Activated CD4-positive, alpha-beta T cell treated with anti-CD3 and anti-CD28 coated beads for 36 hours (primary cell): ENCODE measurements at regions of chr2 and their contacts with region 1.

Region 1: DNA sequence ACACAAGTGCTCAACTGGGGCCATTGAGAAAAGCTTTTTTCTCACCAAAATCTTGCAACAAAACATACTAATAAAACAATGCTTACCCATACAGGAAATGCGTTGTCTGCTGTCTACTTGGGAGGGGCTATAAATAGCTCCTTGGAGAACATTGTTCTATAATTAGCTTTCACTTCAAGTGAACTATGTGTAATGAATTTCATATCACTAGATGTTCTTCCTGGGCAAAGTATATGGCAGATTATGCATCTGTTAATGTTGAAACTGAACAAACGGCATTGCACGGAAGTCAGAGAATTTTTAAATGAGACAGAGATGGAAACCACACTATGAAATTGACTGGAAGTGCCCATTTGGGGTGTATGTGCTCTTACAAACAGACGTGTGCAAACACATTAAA is 6.4 kb upstream of the NPAS2 start:
- DNase-seq: no peak
- ATAC-seq: peak; percentile 86
- H3K4me3 Mint-ChIP-seq: no peak overlapping the region
- H3K27ac Mint-ChIP-seq: peak overlapping the region; percentile 76
- H3K4me1 Mint-ChIP-seq: peaks cover 34% of the 10 kb centered on the region
- H3K27me3 Mint-ChIP-seq: peaks cover 10% of the 10 kb centered on the region

Region 2: DNA sequence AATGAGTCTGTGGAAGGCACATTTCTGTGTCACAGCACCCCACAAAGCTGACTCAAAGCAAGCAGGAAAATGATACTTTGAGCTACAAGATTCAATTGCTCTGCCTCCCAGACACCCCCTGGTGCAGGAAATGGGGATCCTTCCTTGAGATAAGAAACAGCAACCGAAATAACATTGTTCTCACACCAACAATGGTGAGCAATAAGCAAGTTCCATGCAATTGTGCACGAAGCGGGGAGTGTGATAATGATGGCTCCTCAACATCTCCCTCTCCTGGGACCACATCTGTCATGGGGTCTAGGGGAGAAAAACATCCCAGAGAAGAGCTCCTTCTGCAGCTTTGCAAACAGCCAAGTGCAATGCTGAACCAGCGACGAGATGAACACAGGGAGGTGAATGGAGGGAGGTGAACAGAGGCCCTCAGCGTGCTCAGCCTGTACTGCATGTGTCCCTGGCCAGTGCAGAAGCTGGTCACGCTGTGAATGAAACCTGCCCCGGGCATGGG is 183.0 kb before region 1 on chr2:
- CTCF ChIA-PET with region 1: no interaction called
- POLR2A ChIA-PET with region 1: no interaction called
- intact Hi-C with region 1: loop called in 1 of 2 experiments (anchors 5 kb)
- DNase-seq: peak; percentile 68
- ATAC-seq: peak; percentile 86
- H3K4me3 Mint-ChIP-seq: no peak overlapping the region
- H3K27ac Mint-ChIP-seq: no peak overlapping the region
- H3K4me1 Mint-ChIP-seq: peaks cover 27% of the 10 kb centered on the region
- H3K27me3 Mint-ChIP-seq: no peaks in the 10 kb centered on the region

Region 3: GRCh38 chr2:100752628-100753333 is 60.7 kb before region 1 on chr2:
- CTCF ChIA-PET with region 1: interaction called, 4 read pairs
- POLR2A ChIA-PET with region 1: interaction called, 4 read pairs
- intact Hi-C with region 1: loop called in 1 of 2 experiments (anchors 1 kb)
- DNase-seq: no peak
- ATAC-seq: peak; percentile 72
- H3K4me3 Mint-ChIP-seq: no peak overlapping the region
- H3K27ac Mint-ChIP-seq: peak overlapping the region; percentile 21
- H3K4me1 Mint-ChIP-seq: peaks cover 16% of the 10 kb centered on the region
- H3K27me3 Mint-ChIP-seq: peaks cover 1% of the 10 kb centered on the region

Region 4: DNA sequence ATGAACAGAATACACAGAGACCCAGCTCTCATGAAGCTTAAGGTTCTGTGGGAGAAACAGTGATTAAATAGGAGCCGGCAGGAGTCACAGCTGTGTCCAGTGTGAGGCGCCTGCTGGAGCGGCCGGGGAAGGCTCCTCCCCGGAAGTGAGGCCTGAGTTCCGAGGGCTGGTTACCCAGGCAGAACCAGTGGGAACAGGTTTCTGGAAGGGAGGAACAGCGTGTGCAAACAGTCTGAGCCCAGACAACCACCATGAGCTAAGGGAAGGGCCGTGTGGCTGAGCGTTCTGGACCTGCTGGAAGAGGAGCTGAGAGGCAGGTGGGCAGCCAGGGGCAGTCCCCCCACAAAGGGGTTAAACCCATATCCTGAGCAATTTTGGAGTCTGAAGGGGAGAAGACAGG is 19.5 kb before region 1 on chr2:
- CTCF ChIA-PET with region 1: no interaction called
- POLR2A ChIA-PET with region 1: no interaction called
- intact Hi-C with region 1: no loop called
- DNase-seq: no peak
- ATAC-seq: no peak
- H3K4me3 Mint-ChIP-seq: no peak overlapping the region
- H3K27ac Mint-ChIP-seq: no peak overlapping the region
- H3K4me1 Mint-ChIP-seq: no peaks in the 10 kb centered on the region
- H3K27me3 Mint-ChIP-seq: no peaks in the 10 kb centered on the region